ENCODE measurements at regions of chr1 and their contacts with region 1.

Region 1: GRCh38 chr1:997993-998744 is 1.7 kb downstream of the HES4 start:
- DNase-seq: peak; percentile 81

Region 2: GRCh38 chr1:951364-951763 is 46.8 kb before region 1 on chr1:
- intact Hi-C with region 1: no loop called
- DNase-seq: no peak

Region 3: GRCh38 chr1:966611-967300 is 31.4 kb before region 1 on chr1:
- intact Hi-C with region 1: no loop called
- DNase-seq: peak; percentile 93

Region 4: GRCh38 chr1:1153874-1154273 is 155.7 kb after region 1 on chr1:
- intact Hi-C with region 1: loop called in 1 of 2 experiments (anchors 1 kb)
- DNase-seq: no peak

Region 5: GRCh38 chr1:2525920-2526823 is 1528.0 kb after region 1 on chr1 and contains the start of gene PANK4:
- intact Hi-C with region 1: no loop called
- DNase-seq: peak; percentile 97
- total RNA-seq, gene PANK4: 17.4 to 18.6 TPM

Region 6: GRCh38 chr1:2927393-2928360 is 1929.5 kb after region 1 on chr1:
- intact Hi-C with region 1: no loop called
- DNase-seq: no peak

Measured in posterior vena cava (tissue), 2 donors.